Mammary epithelial cell (primary cell): ENCODE measurements at regions of chr9 and their contacts with region 1.

Region 1: GRCh38 chr9:77456829-77457437 is 191.2 kb downstream of the GNA14 start:
- DNase-seq: peak; percentile 78
- H3K4me3 ChIP-seq: no peak overlapping the region
- H3K27ac ChIP-seq: no peak overlapping the region
- H3K4me1 ChIP-seq: no peaks in the 10 kb centered on the region
- H3K27me3 ChIP-seq: no peaks in the 10 kb centered on the region
- CTCF ChIP-seq: peak; percentile 93 to 97

Region 2: DNA sequence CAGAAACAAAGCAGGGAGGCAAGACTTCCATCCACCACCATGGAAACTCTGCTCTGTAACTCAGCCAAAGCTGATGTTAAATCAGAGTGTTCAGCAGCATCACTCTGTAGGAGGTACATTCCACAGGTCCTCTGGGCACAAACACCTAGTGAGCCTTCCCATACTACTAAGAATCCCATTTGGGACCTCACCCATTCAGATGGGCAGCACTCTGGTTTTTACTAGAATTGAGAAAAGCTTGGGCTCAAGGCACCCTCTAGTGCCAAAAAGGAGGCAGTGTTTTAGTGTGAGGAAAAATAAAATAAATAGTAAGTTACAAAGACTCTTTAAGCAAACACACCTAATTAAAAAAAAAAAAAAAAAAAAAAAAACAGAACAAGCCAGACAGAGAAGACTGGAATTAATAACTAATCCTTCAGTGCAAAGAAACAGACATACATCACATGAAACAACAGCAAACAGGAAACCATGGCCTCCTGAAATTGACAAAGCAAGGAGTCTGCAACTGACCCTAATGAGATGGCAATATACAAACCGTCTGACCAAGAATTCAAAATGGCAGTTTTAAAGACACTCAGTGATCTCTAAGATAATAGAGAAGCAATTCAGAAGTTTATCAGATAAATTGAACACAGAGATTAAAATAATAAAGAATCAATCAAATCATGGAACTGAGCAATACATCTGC is 31.6 kb after region 1 on chr9:
- CTCF ChIA-PET with region 1: interaction called, 3 read pairs
- dilution Hi-C with region 1: no loop called
- in situ Hi-C with region 1: no loop called
- intact Hi-C with region 1: loop called (anchors 1 kb)
- DNase-seq: no peak
- H3K4me3 ChIP-seq: no peak overlapping the region
- H3K27ac ChIP-seq: no peak overlapping the region
- H3K4me1 ChIP-seq: no peaks in the 10 kb centered on the region
- H3K27me3 ChIP-seq: no peaks in the 10 kb centered on the region
- CTCF ChIP-seq: peak; percentile 39 to 64

Region 3: DNA sequence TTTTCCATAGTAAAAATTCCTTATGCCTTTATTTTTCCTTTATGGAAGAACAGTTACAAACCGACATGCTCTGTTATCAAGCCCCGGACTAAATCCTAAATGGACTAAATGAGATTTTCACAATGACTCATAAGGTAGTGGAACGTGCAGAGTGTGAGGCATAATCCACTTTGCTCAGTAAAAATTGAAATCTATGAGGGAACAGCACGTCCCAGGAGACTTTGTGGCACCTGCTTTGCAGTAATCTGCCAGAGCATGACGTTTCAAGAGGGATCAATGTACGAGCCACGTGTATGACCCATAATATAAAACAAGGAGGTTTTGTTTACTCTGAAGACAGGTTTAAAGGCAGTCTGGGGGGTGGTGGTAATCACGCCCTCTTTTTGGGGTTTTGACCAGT is 275.0 kb after region 1 on chr9:
- CTCF ChIA-PET with region 1: no interaction called
- dilution Hi-C with region 1: no loop called
- in situ Hi-C with region 1: loop called in 1 of 2 experiments (anchors 25 kb)
- intact Hi-C with region 1: no loop called
- DNase-seq: no peak
- H3K4me3 ChIP-seq: no peak overlapping the region
- H3K27ac ChIP-seq: no peak overlapping the region
- H3K4me1 ChIP-seq: no peaks in the 10 kb centered on the region
- H3K27me3 ChIP-seq: no peaks in the 10 kb centered on the region
- CTCF ChIP-seq: no peak

Region 4: GRCh38 chr9:78121488-78121887 is 664.6 kb after region 1 on chr9:
- CTCF ChIA-PET with region 1: interaction called, 3 read pairs
- dilution Hi-C with region 1: no loop called
- in situ Hi-C with region 1: no loop called
- intact Hi-C with region 1: loop called (anchors 5 kb)
- DNase-seq: peak; percentile 54
- H3K4me3 ChIP-seq: no peak overlapping the region
- H3K27ac ChIP-seq: no peak overlapping the region
- H3K4me1 ChIP-seq: peaks cover 28% of the 10 kb centered on the region
- H3K27me3 ChIP-seq: no peaks in the 10 kb centered on the region
- CTCF ChIP-seq: peak; percentile 80